ENCODE measurements at regions of chr19 and their contacts with region 1.

Region 1: GRCh38 chr19:18281082-18282020 is at the start of gene JUND:
- DNase-seq: peak; percentile 96
- H3K4me3 Mint-ChIP-seq: peak within 1 kb of the TSS; percentile 95
- H3K27ac Mint-ChIP-seq: peak within 1 kb of the TSS; percentile 99
- H3K4me1 Mint-ChIP-seq: peaks cover 45% of the 10 kb centered on the region
- H3K27me3 Mint-ChIP-seq: no peaks in the 10 kb centered on the region
- total RNA-seq, gene JUND: 87.9 to 105 TPM

Region 2: GRCh38 chr19:18023622-18024251 is 257.6 kb before region 1 on chr19:
- CTCF ChIA-PET with region 1: no interaction called
- intact Hi-C with region 1: no loop called
- DNase-seq: peak; percentile 78
- H3K4me3 Mint-ChIP-seq: peak overlapping the region; percentile 74
- H3K27ac Mint-ChIP-seq: peak overlapping the region; percentile 85
- H3K4me1 Mint-ChIP-seq: peaks cover 52% of the 10 kb centered on the region
- H3K27me3 Mint-ChIP-seq: no peaks in the 10 kb centered on the region

Region 3: DNA sequence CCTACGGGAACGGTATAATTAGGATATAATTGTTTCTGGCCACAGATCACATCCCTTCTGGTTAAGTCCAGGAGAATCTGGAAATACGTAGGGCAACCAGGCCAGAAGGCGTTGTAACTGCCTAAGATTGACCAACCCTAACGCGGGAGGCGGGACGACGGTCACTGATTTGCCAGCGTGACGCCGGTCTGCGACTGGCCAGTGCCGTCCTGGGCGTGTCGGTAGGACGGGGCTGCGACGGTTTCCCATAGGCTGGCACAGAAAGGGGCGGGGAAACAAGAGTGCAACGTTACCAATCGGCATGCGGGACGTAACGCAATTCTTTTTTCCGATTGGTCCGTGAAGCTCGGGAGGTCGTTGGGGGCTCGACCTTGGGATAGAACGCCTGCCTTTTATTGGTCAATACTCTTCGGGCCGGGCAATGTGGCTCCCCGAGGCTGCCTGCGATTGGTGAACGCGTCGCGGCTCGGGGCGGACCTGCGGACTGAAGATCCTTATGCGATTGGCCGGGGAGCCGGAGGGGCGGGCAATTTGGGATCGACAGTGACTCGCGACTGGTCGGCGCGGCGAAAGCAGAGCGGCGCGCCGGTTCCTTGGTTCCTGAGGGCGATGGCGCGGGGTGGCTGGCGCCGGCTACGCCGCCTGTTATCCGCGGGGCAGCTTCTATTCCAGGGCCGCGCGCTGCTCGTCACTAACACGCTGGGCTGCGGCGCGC is 88.5 kb before region 1 on chr19 and contains the start of gene MPV17L2:
- CTCF ChIA-PET with region 1: interaction called, 11 read pairs
- intact Hi-C with region 1: loop called (anchors 1 kb)
- DNase-seq: peak; percentile 100
- H3K4me3 Mint-ChIP-seq: peak within 1 kb of the TSS; percentile 83
- H3K27ac Mint-ChIP-seq: peak within 1 kb of the TSS; percentile 90
- H3K4me1 Mint-ChIP-seq: peaks cover 19% of the 10 kb centered on the region
- H3K27me3 Mint-ChIP-seq: no peaks in the 10 kb centered on the region
- total RNA-seq, gene MPV17L2: 6.3 to 6.5 TPM

Region 4: GRCh38 chr19:18304458-18305310 is 23.3 kb after region 1 on chr19:
- CTCF ChIA-PET with region 1: interaction called, 145 read pairs
- intact Hi-C with region 1: loop called (anchors 1 kb)
- DNase-seq: peak; percentile 87
- H3K4me3 Mint-ChIP-seq: peak overlapping the region; percentile 97
- H3K27ac Mint-ChIP-seq: peak overlapping the region; percentile 100
- H3K4me1 Mint-ChIP-seq: peaks cover 42% of the 10 kb centered on the region
- H3K27me3 Mint-ChIP-seq: no peaks in the 10 kb centered on the region

Region 5: GRCh38 chr19:18328340-18329034 is 47.1 kb after region 1 on chr19:
- CTCF ChIA-PET with region 1: interaction called, 240 read pairs
- intact Hi-C with region 1: loop called (anchors 1 kb)
- DNase-seq: peak; percentile 96
- H3K4me3 Mint-ChIP-seq: peak overlapping the region; percentile 68
- H3K27ac Mint-ChIP-seq: no peak overlapping the region
- H3K4me1 Mint-ChIP-seq: peaks cover 21% of the 10 kb centered on the region
- H3K27me3 Mint-ChIP-seq: no peaks in the 10 kb centered on the region

Region 6: DNA sequence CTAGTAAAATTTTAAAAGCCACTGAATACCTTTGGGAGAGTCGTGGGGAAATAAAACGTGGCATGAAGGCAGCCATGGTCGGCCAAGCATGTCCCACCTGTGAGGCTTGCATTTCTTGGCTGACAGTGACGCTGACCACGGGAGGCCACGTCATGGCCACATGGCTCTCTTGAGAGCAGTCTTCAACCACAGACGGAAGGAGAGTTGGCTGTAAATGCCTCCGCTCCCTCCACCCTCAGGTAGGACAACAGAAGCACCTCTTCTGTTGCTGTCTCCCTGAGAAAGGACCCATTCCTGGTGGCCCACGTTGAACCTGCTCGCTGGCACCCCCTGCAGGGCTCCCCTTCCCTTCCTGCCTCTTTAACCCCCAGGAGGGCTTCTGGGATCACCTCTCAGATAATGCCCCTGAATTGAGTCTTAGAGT is 126.7 kb after region 1 on chr19:
- CTCF ChIA-PET with region 1: interaction called, 10 read pairs
- intact Hi-C with region 1: loop called (anchors 2 kb)
- DNase-seq: peak; percentile 46
- H3K4me3 Mint-ChIP-seq: no peak overlapping the region
- H3K27ac Mint-ChIP-seq: no peak overlapping the region
- H3K4me1 Mint-ChIP-seq: no peaks in the 10 kb centered on the region
- H3K27me3 Mint-ChIP-seq: peaks cover 10% of the 10 kb centered on the region

Region 7: GRCh38 chr19:18427743-18428113 is 146.4 kb after region 1 on chr19:
- CTCF ChIA-PET with region 1: no interaction called
- intact Hi-C with region 1: no loop called
- DNase-seq: no peak
- H3K4me3 Mint-ChIP-seq: no peak overlapping the region
- H3K27ac Mint-ChIP-seq: no peak overlapping the region
- H3K4me1 Mint-ChIP-seq: peaks cover 24% of the 10 kb centered on the region
- H3K27me3 Mint-ChIP-seq: no peaks in the 10 kb centered on the region

Region 8: DNA sequence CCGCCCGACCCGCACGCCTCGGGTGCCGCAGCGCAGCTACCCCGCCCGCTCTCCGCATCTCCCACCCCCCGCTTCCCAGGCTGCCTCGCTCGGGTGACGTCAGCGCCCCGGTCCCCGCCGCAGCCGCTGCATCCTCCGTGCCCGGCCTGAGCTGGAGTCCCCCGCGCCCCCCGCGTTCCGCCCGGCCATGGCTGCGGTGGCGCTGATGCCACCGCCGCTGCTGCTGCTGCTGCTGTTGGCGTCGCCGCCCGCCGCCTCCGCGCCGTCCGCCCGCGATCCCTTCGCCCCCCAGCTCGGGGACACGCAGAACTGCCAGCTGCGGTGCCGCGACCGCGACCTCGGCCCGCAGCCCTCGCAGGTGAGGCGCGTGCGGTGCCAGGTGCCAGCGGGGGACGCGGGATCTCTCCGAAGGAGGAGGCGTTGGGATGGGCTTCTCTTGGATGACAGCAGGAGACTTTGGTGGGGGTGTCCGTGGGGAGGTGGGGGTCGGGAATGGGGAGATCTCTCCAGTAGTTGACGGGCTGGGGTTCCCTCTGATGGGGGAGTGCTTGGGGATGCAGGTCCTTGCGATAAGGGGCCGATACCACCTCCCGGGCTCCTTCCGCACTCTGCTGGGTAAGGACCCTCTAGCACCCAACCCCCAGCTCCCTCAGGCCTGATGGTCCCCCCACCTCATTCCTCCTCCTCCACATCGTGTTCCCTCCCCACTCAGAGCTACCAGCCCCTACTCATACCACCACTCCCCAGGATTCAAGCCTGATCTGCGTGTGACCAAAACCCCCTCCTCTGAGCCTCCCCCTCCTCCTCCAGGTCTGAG is 331.6 kb after region 1 on chr19 and contains the start of gene TMEM59L:
- CTCF ChIA-PET with region 1: no interaction called
- intact Hi-C with region 1: no loop called
- DNase-seq: peak; percentile 56
- H3K4me3 Mint-ChIP-seq: peak within 1 kb of the TSS; percentile 61
- H3K27ac Mint-ChIP-seq: no peak within 1 kb of the TSS
- H3K4me1 Mint-ChIP-seq: peaks cover 17% of the 10 kb centered on the region
- H3K27me3 Mint-ChIP-seq: peaks cover 62% of the 10 kb centered on the region
- total RNA-seq, gene TMEM59L: 0.21 to 0.40 TPM

Region 9: GRCh38 chr19:18636183-18636968 is 355.0 kb after region 1 on chr19:
- CTCF ChIA-PET with region 1: no interaction called
- intact Hi-C with region 1: loop called (anchors 2 kb)
- DNase-seq: peak; percentile 100
- H3K4me3 Mint-ChIP-seq: peak overlapping the region; percentile 81
- H3K27ac Mint-ChIP-seq: peak overlapping the region; percentile 57
- H3K4me1 Mint-ChIP-seq: peaks cover 23% of the 10 kb centered on the region
- H3K27me3 Mint-ChIP-seq: no peaks in the 10 kb centered on the region